ENCODE measurements at regions of chr21 and their contacts with region 1.

Region 1: DNA sequence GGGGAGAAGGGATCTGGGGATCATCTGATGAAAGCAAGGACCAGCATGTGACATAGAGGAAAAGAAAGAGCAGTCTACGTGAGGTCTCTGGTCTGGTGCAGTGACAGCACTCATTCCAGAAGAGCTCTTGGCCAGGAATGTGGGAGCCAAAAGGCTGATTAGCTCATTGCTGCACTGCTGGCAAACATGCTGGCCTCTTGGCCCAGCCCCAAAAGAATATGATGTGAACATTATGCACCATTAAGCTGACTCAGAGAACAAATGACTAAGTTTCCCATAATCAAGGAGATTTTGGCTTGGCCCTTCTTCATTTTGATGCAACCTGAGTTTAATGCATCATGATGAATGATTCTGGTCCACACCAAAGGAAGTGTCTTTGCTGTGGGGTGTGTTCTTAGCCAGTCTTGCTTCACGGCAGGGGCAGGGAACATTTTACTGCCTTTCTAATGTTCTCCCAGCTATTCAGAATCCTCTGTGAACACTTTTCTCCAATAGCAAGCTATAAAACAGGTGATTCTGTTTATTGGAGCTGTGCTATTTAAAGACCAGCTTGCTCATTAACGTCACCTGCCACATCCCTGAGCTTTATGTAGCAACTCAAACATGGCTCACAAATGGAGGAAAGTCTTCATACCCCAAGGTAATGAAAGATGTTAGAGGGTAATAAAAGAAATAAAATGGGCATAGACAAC is 55.1 kb downstream of the PCBP3 start:
- DNase-seq: peak; percentile 50
- H3K4me3 ChIP-seq: no peak overlapping the region
- H3K27ac ChIP-seq: no peak overlapping the region
- H3K4me1 ChIP-seq: no peaks in the 10 kb centered on the region
- H3K27me3 ChIP-seq: no peaks in the 10 kb centered on the region
- CTCF ChIP-seq: no peak

Region 2: DNA sequence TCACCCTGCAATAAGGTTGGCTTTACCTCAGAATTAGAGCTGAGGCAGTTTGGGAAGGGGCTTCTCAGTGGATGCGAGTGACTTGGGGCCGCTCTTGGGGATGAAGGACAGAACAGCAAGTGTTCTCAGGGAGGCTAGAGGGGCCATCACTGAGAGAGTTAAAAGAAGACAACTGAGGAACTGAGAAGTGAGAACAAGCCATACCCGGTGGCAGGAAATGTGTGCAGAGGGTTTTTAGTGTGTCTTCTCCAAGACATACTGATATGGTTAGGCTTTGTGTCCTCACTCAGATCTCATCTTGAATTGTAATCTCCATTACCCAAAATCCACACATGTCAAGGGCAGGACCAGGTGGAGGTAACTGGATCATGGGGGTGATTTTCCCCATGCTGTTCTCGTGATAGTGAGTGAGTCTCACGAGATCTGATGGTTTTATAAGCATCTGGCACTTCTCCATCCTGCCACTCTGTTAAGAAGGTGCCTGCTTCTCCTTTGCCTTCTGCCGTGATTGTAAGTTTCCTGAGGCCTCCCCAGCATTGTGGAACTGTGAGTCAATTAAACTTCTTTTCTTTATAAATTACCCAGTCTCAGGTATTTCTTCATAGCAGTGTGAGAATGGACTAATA is 20.7 kb after region 1 on chr21:
- CTCF ChIA-PET with region 1: no interaction called
- POLR2A ChIA-PET with region 1: no interaction called
- intact Hi-C with region 1: loop called (anchors 2 kb)
- DNase-seq: no peak
- H3K4me3 ChIP-seq: no peak overlapping the region
- H3K27ac ChIP-seq: no peak overlapping the region
- H3K4me1 ChIP-seq: peaks cover 22% of the 10 kb centered on the region
- H3K27me3 ChIP-seq: no peaks in the 10 kb centered on the region
- CTCF ChIP-seq: no peak

Region 3: DNA sequence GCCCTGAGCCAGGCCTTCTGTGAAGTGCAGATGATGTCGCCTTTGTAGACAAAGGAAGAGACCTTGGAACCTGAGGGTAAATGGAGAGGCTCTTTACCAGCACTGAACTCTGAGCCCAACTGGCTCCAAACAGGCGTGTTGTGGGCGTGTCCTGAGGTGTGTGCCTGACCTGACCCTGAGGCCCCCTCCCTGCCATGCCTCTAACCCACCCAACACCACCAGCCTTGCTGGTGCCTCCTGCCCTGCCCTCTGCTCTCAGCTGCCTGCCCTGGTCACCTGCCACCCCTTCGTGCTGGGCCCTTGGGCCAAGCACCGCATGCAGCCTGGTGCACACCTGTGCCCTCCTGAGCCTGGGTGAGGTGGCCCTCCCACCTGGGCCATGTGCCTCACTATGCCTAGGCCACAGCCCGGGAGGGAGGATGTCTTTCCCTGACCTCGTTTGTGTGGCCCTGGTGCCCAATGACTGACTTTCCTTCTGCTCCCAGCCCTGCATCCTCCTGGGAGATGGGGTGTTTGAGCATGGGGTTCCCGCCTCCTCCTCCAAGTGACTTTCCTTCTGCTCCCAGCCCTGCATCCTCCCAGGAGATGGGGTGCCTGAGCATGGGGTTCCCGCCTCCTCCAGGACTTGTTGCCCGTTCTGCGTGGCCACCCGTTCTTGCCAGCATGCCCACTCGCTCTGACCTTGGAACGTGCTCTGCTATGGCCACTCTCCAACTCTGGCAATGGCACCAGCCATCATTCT is 101.9 kb after region 1 on chr21:
- CTCF ChIA-PET with region 1: no interaction called
- POLR2A ChIA-PET with region 1: no interaction called
- intact Hi-C with region 1: no loop called
- DNase-seq: no peak
- H3K4me3 ChIP-seq: no peak overlapping the region
- H3K27ac ChIP-seq: no peak overlapping the region
- H3K4me1 ChIP-seq: no peaks in the 10 kb centered on the region
- H3K27me3 ChIP-seq: no peaks in the 10 kb centered on the region
- CTCF ChIP-seq: no peak